A673 (cell line): ENCODE measurements at regions of chr11 and their contacts with region 1.

Region 1: GRCh38 chr11:130213143-130213978 is 53.8 kb downstream of the ST14 start:
- DNase-seq: peak; percentile 75
- H3K4me3 ChIP-seq: no peak overlapping the region
- H3K27ac ChIP-seq: no peak overlapping the region
- H3K4me1 ChIP-seq: no peaks in the 10 kb centered on the region
- H3K27me3 ChIP-seq: no peaks in the 10 kb centered on the region
- CTCF ChIP-seq: peak; percentile 99

Region 2: DNA sequence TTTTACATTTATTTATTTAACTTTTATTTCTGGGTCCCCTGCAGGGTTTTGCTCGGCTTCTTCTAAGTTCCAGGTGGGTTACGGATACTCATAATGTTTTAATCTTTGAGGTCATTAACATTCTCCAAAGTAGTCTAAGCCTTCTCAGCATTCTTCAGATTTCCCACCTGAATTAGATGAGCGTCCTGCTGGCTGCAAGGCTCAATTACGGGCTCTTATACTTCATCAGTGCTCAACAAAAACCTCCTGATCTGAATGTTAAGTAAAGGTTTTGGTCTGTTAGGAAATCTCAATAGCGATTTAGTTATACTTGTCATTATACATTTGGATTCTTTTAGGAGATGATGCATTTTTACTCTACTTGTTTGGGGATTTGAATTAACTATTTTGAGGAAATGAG is 290.7 kb before region 1 on chr11:
- CTCF ChIA-PET with region 1: no interaction called
- POLR2A ChIA-PET with region 1: no interaction called
- intact Hi-C with region 1: loop called (anchors 5 kb)
- DNase-seq: no peak
- H3K4me3 ChIP-seq: no peak overlapping the region
- H3K27ac ChIP-seq: no peak overlapping the region
- H3K4me1 ChIP-seq: no peaks in the 10 kb centered on the region
- H3K27me3 ChIP-seq: no peaks in the 10 kb centered on the region
- CTCF ChIP-seq: no peak

Region 3: GRCh38 chr11:130115218-130115617 is 98.1 kb before region 1 on chr11:
- CTCF ChIA-PET with region 1: no interaction called
- POLR2A ChIA-PET with region 1: no interaction called
- intact Hi-C with region 1: no loop called
- DNase-seq: peak; percentile 37
- H3K4me3 ChIP-seq: no peak overlapping the region
- H3K27ac ChIP-seq: no peak overlapping the region
- H3K4me1 ChIP-seq: peaks cover 6% of the 10 kb centered on the region
- H3K27me3 ChIP-seq: no peaks in the 10 kb centered on the region
- CTCF ChIP-seq: no peak

Region 4: GRCh38 chr11:130131961-130132850 is 81.2 kb before region 1 on chr11:
- CTCF ChIA-PET with region 1: no interaction called
- POLR2A ChIA-PET with region 1: no interaction called
- intact Hi-C with region 1: no loop called
- DNase-seq: peak; percentile 81
- H3K4me3 ChIP-seq: no peak overlapping the region
- H3K27ac ChIP-seq: no peak overlapping the region
- H3K4me1 ChIP-seq: no peaks in the 10 kb centered on the region
- H3K27me3 ChIP-seq: no peaks in the 10 kb centered on the region
- CTCF ChIP-seq: peak; percentile 94

Region 5: GRCh38 chr11:130427581-130428315 is 214.4 kb after region 1 on chr11:
- CTCF ChIA-PET with region 1: interaction called, 23 read pairs
- POLR2A ChIA-PET with region 1: no interaction called
- intact Hi-C with region 1: loop called (anchors 1 kb)
- DNase-seq: no peak
- H3K4me3 ChIP-seq: peak overlapping the region; percentile 35
- H3K27ac ChIP-seq: no peak overlapping the region
- H3K4me1 ChIP-seq: peaks cover 14% of the 10 kb centered on the region
- H3K27me3 ChIP-seq: peaks cover 86% of the 10 kb centered on the region
- CTCF ChIP-seq: 0 out of 2 replicates have a peak, but pooled peaks have one; percentile 11

Region 6: DNA sequence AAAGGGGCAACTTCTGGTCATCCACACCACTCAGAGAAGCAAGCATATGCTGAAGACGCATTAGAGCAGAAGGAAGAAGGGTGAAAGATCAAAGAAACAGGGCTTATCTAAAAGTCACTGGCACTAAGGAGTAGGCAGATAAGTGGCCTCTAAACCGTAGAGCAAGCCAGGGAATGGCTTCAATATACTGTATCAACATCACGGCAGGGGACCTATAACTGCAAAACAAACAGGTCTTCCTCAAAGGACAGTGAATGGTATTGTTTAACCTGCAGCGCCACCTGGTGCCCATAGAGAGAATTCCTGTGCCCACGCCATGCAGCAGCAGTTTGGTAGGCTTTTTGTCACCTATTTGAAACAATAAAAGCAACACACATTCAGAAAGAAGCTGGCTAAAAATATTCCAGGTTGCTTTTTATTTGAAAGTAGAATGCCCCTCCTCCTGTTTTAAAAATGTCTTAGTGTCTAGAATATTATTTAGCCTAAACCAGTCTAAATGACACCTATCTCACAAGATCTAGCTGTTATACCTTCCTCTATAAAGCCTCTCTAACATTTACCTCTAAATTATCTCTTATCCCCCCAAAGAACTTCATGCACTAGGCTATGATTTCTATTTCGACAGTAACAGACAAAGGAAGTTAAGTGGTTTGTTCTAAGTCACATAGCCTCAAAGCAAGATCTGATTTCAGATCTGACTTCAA is 681.1 kb after region 1 on chr11:
- CTCF ChIA-PET with region 1: no interaction called
- POLR2A ChIA-PET with region 1: no interaction called
- intact Hi-C with region 1: loop called (anchors 10 kb)
- DNase-seq: peak; percentile 90
- H3K4me3 ChIP-seq: no peak overlapping the region
- H3K27ac ChIP-seq: no peak overlapping the region
- H3K4me1 ChIP-seq: no peaks in the 10 kb centered on the region
- H3K27me3 ChIP-seq: no peaks in the 10 kb centered on the region
- CTCF ChIP-seq: peak; percentile 96